ENCODE measurements at regions of chr6 and their contacts with region 1.

Region 1: GRCh38 chr6:37177077-37177934 is 7.4 kb downstream of the PIM1 start:
- DNase-seq: no peak
- H3K4me3 ChIP-seq: no peak overlapping the region
- H3K27me3 ChIP-seq: no peaks in the 10 kb centered on the region
- CTCF ChIP-seq: peak; percentile 11; the same call in 1 of the 2 replicates

Region 2: GRCh38 chr6:37085198-37085597 is 92.1 kb before region 1 on chr6:
- CTCF ChIA-PET with region 1: interaction called, 4 read pairs
- POLR2A ChIA-PET with region 1: interaction called, 10 read pairs
- DNase-seq: no peak
- H3K4me3 ChIP-seq: no peak overlapping the region
- H3K27me3 ChIP-seq: peaks cover 2% of the 10 kb centered on the region; the same call in 1 of the 2 replicates
- CTCF ChIP-seq: no peak

Region 3: GRCh38 chr6:37190159-37190535 is 12.8 kb after region 1 on chr6:
- CTCF ChIA-PET with region 1: interaction called, 8 read pairs
- POLR2A ChIA-PET with region 1: interaction called, 11 read pairs
- DNase-seq: no peak
- H3K4me3 ChIP-seq: no peak overlapping the region
- H3K27me3 ChIP-seq: no peaks in the 10 kb centered on the region; the same call in 1 of the 2 replicates
- CTCF ChIP-seq: no peak

Region 4: GRCh38 chr6:37251211-37251780 is 74.0 kb after region 1 on chr6:
- CTCF ChIA-PET with region 1: no interaction called
- POLR2A ChIA-PET with region 1: no interaction called
- DNase-seq: no peak
- H3K4me3 ChIP-seq: no peak overlapping the region
- H3K27me3 ChIP-seq: no peaks in the 10 kb centered on the region
- CTCF ChIP-seq: no peak